Activated CD8-positive, alpha-beta memory T cell treated with anti-CD3 and anti-CD28 coated beads, Interleukin-2, amount 10 ng/mL, durations not matched to agents 7 days and 5 days (primary cell): ENCODE measurements at regions of chr13 and their contacts with region 1.

Region 1: DNA sequence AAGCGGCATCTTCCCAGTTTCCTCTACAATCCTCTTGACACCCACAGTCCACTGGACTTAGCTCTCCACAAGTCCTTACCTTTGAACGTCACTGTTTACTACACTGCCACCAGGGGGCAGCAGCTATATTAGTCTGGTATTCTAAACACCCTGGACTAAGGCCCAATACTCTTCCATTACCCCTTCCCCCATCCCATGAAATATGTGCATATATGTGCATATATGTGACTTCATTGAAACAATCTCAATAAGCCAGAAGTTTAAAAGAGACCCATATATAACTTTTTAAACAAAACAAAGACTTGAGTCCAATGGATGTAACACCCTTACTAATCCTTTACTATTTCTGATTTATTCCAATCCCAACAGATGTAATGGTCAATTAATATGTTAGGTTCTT is 15.5 kb downstream of the GGACT start:
- DNase-seq: peak; percentile 84
- ATAC-seq: peak; percentile 86
- H3K4me3 Mint-ChIP-seq: no peak overlapping the region
- H3K27ac Mint-ChIP-seq: no peak overlapping the region
- H3K4me1 Mint-ChIP-seq: peaks cover 21% of the 10 kb centered on the region
- H3K27me3 Mint-ChIP-seq: no peaks in the 10 kb centered on the region

Region 2: DNA sequence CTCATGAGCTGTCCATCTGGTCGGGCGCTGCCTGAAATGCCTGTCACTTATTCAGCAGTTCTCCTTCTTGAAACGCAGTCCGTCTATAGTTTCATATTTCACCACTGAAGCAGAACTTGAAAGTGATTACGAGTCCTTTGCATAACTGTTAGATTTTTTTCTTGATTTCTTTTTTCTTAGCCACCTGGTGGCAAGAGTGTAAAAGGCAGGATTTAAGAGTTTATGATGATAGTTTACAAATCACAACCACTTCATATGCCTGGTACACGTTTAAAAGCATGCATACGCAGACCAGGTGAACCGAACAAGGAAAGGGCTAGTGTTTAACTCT is 30.3 kb before region 1 on chr13:
- CTCF ChIA-PET with region 1: no interaction called
- DNase-seq: peak; percentile 40
- ATAC-seq: no peak
- H3K4me3 Mint-ChIP-seq: no peak overlapping the region
- H3K27ac Mint-ChIP-seq: no peak overlapping the region
- H3K4me1 Mint-ChIP-seq: peaks cover 20% of the 10 kb centered on the region
- H3K27me3 Mint-ChIP-seq: no peaks in the 10 kb centered on the region

Region 3: GRCh38 chr13:100588331-100589177 is 15.4 kb after region 1 on chr13 and contains the start of gene GGACT:
- CTCF ChIA-PET with region 1: interaction called, 38 read pairs
- DNase-seq: peak; percentile 87
- ATAC-seq: peak; percentile 97
- H3K4me3 Mint-ChIP-seq: peak within 1 kb of the TSS; percentile 70
- H3K27ac Mint-ChIP-seq: peak within 1 kb of the TSS; percentile 90
- H3K4me1 Mint-ChIP-seq: peaks cover 43% of the 10 kb centered on the region
- H3K27me3 Mint-ChIP-seq: no peaks in the 10 kb centered on the region
- total RNA-seq, gene GGACT: 5.0 to 5.3 TPM

Region 4: DNA sequence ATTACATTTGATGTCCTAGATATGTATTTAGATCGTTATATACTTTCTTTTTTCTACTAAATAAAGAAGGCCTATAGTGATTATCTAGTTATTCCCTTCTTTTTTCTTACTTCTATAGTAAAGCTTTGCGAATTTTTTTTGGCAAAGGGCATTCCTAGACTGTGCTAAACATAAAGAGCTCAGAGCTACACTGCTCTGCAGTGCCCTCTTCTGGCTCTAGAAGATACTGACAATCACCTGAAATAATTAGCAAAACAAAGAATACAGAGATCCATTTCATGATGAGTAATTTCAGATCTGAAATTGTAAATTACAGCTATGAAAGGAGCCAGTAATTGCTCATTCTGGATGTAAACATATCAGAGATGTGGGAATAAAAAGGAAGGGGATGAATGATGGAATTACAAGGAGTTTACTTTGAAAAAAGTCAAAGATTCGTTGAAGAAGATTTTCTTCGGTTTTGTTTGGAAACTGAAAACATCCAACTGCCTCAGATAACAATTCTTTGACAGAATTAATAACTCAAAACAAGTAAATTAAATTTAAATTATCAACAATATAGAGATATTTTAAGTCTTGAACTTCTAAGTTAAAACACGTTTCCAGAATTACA is 554.7 kb after region 1 on chr13:
- CTCF ChIA-PET with region 1: interaction called, 27 read pairs
- DNase-seq: no peak
- ATAC-seq: peak; percentile 49
- H3K4me3 Mint-ChIP-seq: no peak overlapping the region
- H3K27ac Mint-ChIP-seq: no peak overlapping the region
- H3K4me1 Mint-ChIP-seq: no peaks in the 10 kb centered on the region
- H3K27me3 Mint-ChIP-seq: peaks cover 14% of the 10 kb centered on the region